Caco-2 (cell line): ENCODE measurements at regions of chr15 and their contacts with region 1.

Region 1: DNA sequence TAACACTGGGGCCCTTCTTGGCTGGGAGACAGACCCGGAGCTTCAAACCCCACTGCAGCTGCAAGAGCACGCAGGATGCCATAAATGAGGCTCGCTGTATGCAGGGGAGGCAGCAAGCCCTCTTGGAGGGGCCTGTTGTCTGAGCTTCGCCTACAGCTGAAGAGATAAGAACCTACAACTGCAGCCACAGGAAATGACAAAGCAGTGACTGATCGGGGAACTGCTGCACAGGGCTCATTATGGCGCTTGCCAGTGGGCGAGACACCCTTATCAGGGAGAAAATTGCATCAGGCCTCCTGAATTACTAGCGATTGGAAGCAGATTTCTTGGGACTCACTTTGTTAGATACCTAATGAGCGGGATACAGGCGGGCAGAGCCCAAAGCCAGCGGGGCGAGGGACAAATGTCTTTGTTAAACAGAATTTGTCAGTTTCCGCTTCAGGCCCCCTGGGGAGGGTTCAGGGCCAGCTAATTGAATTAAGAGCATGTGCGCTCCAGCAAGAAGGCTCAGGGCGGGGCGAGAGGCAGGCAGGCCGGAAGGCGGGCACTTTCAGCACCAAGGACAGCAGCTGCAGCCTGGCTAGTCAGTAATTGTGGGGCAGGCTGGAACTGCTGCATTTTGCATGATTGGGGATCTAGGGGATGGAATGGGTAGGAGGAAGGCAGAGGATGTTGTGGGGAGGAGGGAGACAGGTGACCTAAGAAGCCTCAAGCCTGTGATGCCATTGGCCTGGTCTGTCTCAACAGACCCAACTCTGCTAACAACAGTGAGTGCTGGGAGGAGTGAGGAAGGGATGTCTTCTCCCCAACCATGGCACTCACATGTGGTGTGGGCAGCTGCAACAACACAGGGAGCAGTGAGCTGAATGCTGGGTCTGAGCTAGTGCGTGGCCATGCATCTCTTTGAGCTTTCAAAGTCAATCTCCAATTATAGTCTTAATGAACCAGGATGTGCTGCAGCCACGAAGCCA is 55.3 kb downstream of the CCDC33 start:
- DNase-seq: peak; percentile 59 to 84
- H3K4me3 ChIP-seq: no peak overlapping the region
- H3K4me3 Mint-ChIP-seq: no peak overlapping the region
- H3K27ac Mint-ChIP-seq: no peak overlapping the region
- H3K4me1 ChIP-seq: no peaks in the 10 kb centered on the region
- H3K4me1 Mint-ChIP-seq: no peaks in the 10 kb centered on the region
- H3K27me3 ChIP-seq: no peaks in the 10 kb centered on the region; the same call in 1 of the 2 replicates
- H3K27me3 Mint-ChIP-seq: peaks cover 20% of the 10 kb centered on the region
- CTCF ChIP-seq: no peak

Region 2: DNA sequence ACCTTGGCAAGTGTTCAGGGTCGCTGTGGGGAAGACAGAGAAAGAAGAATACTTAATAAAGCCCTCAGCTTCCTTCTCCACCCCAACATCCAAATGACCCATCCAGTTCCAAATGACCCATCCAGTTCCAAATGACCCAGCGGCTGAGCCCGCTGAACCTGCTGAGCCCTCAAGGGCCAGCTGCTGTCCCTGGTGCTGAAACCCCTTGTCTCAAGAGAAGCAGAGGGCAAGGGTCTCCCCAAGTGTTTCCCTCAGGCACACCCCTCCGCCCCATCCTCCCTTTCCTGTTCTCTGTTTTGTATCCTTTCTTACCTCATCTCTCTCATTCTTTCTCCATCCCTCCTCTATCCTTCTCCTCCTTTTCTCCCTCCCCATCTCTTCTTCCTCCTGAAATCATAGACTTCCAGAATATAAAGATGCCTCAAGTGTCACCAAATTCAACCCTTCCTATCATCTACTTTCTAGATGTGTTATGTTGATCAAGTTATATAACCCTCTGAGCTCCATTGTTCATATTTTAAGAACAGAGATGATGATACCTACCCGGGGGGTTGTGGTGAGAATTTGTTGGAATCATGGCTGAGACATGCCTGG is 26.2 kb before region 1 on chr15:
- CTCF ChIA-PET with region 1: no interaction called
- POLR2A ChIA-PET with region 1: no interaction called
- intact Hi-C with region 1: loop called (anchors 1 kb)
- DNase-seq: peak in 1 of 2 experiments; percentile 59
- H3K4me3 ChIP-seq: no peak overlapping the region
- H3K4me3 Mint-ChIP-seq: no peak overlapping the region
- H3K27ac Mint-ChIP-seq: no peak overlapping the region
- H3K4me1 ChIP-seq: no peaks in the 10 kb centered on the region
- H3K4me1 Mint-ChIP-seq: no peaks in the 10 kb centered on the region
- H3K27me3 ChIP-seq: peaks cover under 1% of the 10 kb centered on the region; the same call in 1 of the 2 replicates
- H3K27me3 Mint-ChIP-seq: peaks cover 15% of the 10 kb centered on the region
- CTCF ChIP-seq: no peak

Region 3: GRCh38 chr15:74340139-74340538 is 48.8 kb after region 1 on chr15:
- CTCF ChIA-PET with region 1: no interaction called
- POLR2A ChIA-PET with region 1: no interaction called
- intact Hi-C with region 1: no loop called
- DNase-seq: peak in 1 of 2 experiments; percentile 28
- H3K4me3 ChIP-seq: no peak overlapping the region
- H3K4me3 Mint-ChIP-seq: no peak overlapping the region
- H3K27ac Mint-ChIP-seq: no peak overlapping the region
- H3K4me1 ChIP-seq: 0 out of 2 replicates have a peak, but pooled peaks cover 7% of the 10 kb centered on the region
- H3K4me1 Mint-ChIP-seq: no peaks in the 10 kb centered on the region
- H3K27me3 ChIP-seq: no peaks in the 10 kb centered on the region
- H3K27me3 Mint-ChIP-seq: peaks cover 3% of the 10 kb centered on the region
- CTCF ChIP-seq: no peak